ENCODE measurements at regions of chr12 and their contacts with region 1.

Region 1: DNA sequence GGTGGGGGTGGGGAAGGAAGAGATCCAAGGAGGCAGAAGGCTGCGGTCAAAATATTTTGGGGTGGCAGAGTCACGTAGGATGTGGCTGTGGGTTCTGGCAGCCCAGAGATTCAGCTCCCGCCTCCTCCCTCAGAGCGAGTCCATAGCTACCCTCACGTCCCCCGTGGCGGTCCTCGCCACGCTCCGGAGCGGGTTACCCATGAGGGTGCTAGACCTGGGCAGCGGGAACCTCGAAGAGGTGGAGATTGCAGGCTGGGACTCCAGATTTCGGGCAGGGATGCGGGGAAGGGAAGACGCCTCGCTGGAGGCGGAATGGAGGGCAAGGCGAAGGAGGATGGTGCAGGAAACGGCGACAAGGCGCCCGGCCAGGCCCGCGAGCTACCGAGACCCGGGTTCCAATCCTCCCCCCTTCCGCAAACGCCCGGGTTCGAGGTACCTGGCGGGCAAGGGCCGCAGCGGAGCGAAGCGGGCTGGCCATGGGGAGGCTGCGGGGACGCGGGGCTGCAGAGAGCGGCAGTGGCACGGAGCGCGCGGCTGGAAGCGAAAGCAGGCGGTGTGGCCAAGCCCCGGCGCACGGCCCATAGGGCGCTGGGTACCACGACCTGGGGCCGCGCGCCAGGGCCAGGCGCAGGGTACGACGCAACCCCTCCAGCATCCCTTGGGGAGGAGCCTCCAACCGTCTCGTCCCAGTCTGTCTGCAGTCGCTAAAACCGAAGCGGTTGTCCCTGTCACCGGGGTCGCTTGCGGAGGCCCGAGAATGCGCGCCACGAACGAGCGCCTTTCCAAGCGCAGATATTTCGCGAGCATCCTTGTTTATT is 46.2 kb downstream of the BCAT1 start:
- DNase-seq: peak; percentile 23
- H3K4me3 Mint-ChIP-seq: peak overlapping the region; percentile 85
- H3K27ac Mint-ChIP-seq: peak overlapping the region; percentile 71
- H3K4me1 Mint-ChIP-seq: peaks cover 31% of the 10 kb centered on the region
- H3K27me3 Mint-ChIP-seq: peaks cover 28% of the 10 kb centered on the region

Region 2: DNA sequence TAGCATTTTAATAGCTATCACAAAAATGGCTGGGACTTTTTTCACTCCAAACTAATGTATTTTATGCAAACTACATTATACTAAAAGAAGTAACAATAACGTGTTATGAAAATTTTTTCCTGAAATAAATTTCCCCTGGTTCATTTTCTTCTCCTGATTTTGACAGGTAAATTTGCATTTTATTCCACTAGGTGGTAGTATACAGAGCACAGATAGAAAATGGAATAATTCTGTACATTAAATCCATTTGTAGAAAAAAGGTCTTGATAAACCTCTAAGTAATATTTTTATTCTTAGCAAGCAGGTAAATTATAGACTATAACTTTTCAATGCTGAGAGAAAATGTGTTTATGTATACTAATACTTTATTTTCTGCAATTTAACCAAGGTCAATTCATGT is 50.3 kb before region 1 on chr12:
- CTCF ChIA-PET with region 1: interaction called, 5 read pairs
- intact Hi-C with region 1: loop called (anchors 2 kb)
- DNase-seq: no peak
- H3K4me3 Mint-ChIP-seq: no peak overlapping the region
- H3K27ac Mint-ChIP-seq: no peak overlapping the region
- H3K4me1 Mint-ChIP-seq: peaks cover 17% of the 10 kb centered on the region
- H3K27me3 Mint-ChIP-seq: peaks cover 20% of the 10 kb centered on the region

Region 3: GRCh38 chr12:24919346-24920001 is 16.8 kb after region 1 on chr12:
- CTCF ChIA-PET with region 1: no interaction called
- intact Hi-C with region 1: loop called (anchors 1 kb)
- DNase-seq: peak; percentile 78
- H3K4me3 Mint-ChIP-seq: no peak overlapping the region
- H3K27ac Mint-ChIP-seq: no peak overlapping the region
- H3K4me1 Mint-ChIP-seq: peaks cover 42% of the 10 kb centered on the region
- H3K27me3 Mint-ChIP-seq: peaks cover 13% of the 10 kb centered on the region

Region 4: GRCh38 chr12:24948757-24949722 is 46.3 kb after region 1 on chr12 and contains the start of gene BCAT1:
- CTCF ChIA-PET with region 1: no interaction called
- intact Hi-C with region 1: loop called (anchors 1 kb)
- DNase-seq: peak; percentile 35
- H3K4me3 Mint-ChIP-seq: peak within 1 kb of the TSS; percentile 81
- H3K27ac Mint-ChIP-seq: peak within 1 kb of the TSS; percentile 81
- H3K4me1 Mint-ChIP-seq: peaks cover 59% of the 10 kb centered on the region
- H3K27me3 Mint-ChIP-seq: peaks cover 62% of the 10 kb centered on the region
- total RNA-seq, gene BCAT1: 16.4 to 16.7 TPM

Region 5: DNA sequence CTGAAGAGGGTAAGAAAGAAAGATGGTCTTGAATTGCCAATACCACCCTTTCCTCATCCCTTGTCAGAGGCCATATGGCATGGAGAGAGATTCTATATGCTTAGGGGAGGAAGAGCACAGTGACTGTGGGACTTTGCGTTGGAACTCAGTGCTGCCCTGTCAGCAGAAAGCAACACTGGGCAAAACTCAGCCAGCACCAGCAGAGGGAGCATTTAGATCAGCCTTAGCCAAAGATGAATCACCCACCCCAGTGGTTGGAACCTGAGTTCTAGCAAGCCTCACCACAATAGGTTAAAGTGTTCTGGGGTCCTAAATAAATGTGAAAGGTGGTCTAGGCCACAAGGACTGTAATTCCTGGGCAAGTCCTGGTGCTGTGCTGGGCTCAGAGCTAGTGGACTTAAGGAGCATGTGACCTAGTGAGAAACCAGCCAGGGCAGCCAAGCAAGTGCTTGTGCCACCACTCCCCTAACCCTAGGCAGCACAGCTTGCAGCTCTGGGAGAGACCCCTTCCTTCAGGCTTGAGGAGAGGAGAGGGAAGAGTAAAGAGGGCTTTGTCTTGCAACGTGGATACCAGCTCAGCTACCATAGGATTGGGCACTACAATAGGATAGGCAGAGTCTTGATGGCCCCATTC is 57.6 kb after region 1 on chr12:
- CTCF ChIA-PET with region 1: no interaction called
- intact Hi-C with region 1: loop called (anchors 1 kb)
- DNase-seq: peak; percentile 76
- H3K4me3 Mint-ChIP-seq: no peak overlapping the region
- H3K27ac Mint-ChIP-seq: no peak overlapping the region
- H3K4me1 Mint-ChIP-seq: peaks cover 23% of the 10 kb centered on the region
- H3K27me3 Mint-ChIP-seq: peaks cover 17% of the 10 kb centered on the region